ENCODE measurements at regions of chr15 and their contacts with region 1.

Region 1: DNA sequence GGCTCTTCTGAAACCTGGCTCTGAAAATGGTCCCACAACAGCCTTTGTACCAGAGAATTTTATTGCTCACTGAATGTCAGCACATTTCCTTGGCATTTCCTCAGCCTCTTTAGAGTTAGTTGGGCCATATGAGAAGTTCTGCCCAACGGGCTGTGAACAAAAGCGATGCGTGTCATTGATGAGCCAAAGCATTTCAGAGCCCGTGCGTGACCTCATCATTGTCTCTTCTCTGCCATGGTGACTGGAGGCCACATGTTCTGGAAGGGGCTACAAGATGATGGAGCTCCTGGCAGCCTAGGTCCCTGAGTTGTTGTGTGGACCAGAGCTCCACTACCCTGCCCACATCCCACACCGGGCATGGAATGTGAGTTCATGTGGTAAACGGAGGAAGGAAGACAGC is 47.2 kb upstream of the LINGO1 start:
- DNase-seq: no peak
- H3K4me3 ChIP-seq: no peak overlapping the region
- H3K27ac ChIP-seq: no peak overlapping the region
- H3K4me1 ChIP-seq: no peaks in the 10 kb centered on the region
- H3K27me3 ChIP-seq: peaks cover 10% of the 10 kb centered on the region
- CTCF ChIP-seq: no peak
- EP300 ChIP-seq: no peak
- POLR2A ChIP-seq: no peak

Region 2: GRCh38 chr15:77457191-77457904 is 222.6 kb before region 1 on chr15:
- in situ Hi-C with region 1: no loop called
- intact Hi-C with region 1: no loop called
- DNase-seq: no peak
- H3K4me3 ChIP-seq: no peak overlapping the region
- H3K27ac ChIP-seq: peak overlapping the region in 2 of 4 donors; percentile 7 to 9
- H3K4me1 ChIP-seq: peaks cover 3 to 34% (median 14%) of the 10 kb centered on the region in 4 donors
- H3K27me3 ChIP-seq: no peaks in the 10 kb centered on the region
- CTCF ChIP-seq: no peak
- EP300 ChIP-seq: no peak
- POLR2A ChIP-seq: no peak

Region 3: GRCh38 chr15:77643520-77644163 is 36.3 kb before region 1 on chr15:
- in situ Hi-C with region 1: no loop called
- intact Hi-C with region 1: loop called (anchors 1 kb)
- DNase-seq: no peak
- H3K4me3 ChIP-seq: no peak overlapping the region
- H3K27ac ChIP-seq: no peak overlapping the region
- H3K4me1 ChIP-seq: peaks cover 0 to 3% (median under 1%) of the 10 kb centered on the region in 4 donors
- H3K27me3 ChIP-seq: no peaks in the 10 kb centered on the region
- CTCF ChIP-seq: no peak
- EP300 ChIP-seq: no peak
- POLR2A ChIP-seq: no peak

Measured in transverse colon (tissue), 4 donors.